Left cardiac atrium (tissue), 4 donors: ENCODE measurements at regions of chr9 and their contacts with region 1.

Region 1: GRCh38 chr9:124771021-124771866 is at the start of gene NR6A1:
- DNase-seq: peak; percentile 97
- ATAC-seq: peak; percentile 95 to 96
- total RNA-seq, gene NR6A1: 1.2 to 1.3 TPM

Region 2: DNA sequence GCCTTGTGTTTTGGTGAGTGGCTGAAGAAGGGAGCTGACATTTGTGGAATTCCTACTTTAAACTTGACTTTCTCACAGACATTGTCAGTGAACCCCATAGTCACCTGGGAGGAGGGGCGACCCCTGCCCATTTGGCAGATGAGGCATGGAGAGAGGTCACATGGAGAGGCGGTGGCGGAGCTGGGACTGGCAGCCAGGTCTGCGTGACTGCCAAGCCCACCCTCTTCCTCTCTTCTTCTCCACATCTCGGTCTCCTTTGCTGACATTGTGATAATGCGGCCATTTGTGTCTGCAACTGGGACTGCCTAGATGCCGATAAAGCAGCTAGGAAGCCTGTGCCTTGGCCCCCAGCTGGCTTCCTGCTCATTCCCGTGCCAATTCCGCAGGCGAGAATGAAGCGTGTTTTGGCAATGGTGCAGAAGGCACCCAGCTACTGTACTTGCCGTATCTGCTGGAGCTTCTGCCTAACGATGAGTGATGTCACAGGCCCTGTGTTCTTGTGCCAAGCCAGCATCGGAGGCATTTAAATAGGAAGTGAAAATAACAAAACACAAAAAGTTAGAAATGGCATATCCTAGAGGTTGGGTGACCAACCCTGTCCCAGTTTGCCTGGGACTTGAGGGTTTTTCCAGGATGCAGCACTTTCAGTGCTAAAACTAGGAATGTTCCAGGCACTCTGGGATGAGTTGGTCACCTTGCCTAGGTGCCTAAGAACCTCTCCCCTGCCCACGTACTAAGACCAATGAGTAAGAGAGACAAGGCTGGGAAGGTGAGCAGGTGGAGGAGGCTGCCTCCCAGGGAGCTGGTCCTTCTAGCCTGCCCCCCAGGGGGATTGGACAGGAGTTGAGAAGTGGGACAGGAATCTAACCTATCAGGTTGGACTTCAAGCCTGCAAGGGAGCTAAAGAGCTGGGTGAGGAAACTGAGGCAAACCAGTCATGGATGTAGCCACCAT is 29.3 kb after region 1 on chr9:
- intact Hi-C with region 1: no loop called
- DNase-seq: peak; percentile 50
- ATAC-seq: peak; percentile 70 to 71

Region 3: DNA sequence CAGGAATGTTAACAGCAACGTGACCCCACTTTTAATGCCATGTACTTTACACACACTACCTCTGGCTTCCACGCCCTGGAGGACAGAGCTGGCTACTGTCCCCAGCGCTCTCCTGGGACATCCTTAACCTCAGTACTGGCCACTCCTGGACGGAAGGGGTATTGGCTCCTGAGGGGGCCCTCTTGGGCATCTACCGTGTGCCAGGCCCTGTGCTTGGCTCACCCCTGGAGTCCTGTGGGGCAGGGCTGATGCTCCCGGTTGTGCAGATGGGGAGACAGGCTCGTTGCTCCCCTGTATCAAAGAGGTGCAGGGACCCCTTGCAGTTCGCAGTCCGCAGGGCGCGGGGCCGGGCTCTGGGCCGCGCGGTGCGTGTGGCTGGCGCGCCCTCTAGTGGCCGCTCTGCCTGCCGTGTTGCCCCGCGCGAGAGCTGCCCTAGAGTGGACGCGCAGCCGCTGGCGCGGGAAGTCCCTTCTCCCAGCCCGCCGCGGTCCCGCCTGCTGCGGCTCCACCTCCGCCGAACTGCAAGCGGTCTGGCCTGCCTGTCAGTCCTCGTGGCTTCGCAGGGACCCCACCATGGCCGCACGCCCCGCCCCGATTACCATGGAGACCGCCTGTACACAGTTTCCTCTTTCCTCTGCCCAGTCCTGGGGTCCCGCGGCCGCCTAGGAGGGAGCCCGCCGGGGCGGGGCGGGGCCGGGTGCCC is 81.7 kb after region 1 on chr9 and contains the start of gene WDR38:
- intact Hi-C with region 1: loop called (anchors 1 to 2 kb)
- DNase-seq: peak; percentile 84
- ATAC-seq: peak; percentile 89 to 92
- total RNA-seq, gene WDR38: not detected

Region 4: GRCh38 chr9:125066839-125067619 is 295.8 kb after region 1 on chr9:
- intact Hi-C with region 1: no loop called
- DNase-seq: no peak
- ATAC-seq: peak in 1 of 2 donors; percentile 23

Region 5: DNA sequence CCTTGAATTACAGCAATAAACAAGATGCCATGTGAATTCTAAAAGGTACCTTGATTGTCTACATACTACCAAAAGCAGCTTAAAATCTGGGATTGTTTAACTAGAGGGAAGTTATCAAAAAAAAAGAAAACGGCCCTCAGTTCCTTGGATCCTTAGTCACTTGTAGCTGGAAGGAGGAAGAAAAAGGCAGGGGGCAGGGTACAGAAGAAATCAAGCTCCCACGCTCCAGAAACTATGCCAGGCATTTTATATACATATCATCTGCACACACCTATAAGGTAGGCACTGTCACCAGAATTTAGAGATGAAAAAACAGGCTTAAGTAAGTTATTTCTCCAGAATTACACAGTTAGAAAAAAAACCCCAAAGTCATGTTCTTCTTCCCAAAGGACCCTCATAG is 308.7 kb after region 1 on chr9:
- intact Hi-C with region 1: no loop called
- DNase-seq: no peak
- ATAC-seq: no peak

Region 6: DNA sequence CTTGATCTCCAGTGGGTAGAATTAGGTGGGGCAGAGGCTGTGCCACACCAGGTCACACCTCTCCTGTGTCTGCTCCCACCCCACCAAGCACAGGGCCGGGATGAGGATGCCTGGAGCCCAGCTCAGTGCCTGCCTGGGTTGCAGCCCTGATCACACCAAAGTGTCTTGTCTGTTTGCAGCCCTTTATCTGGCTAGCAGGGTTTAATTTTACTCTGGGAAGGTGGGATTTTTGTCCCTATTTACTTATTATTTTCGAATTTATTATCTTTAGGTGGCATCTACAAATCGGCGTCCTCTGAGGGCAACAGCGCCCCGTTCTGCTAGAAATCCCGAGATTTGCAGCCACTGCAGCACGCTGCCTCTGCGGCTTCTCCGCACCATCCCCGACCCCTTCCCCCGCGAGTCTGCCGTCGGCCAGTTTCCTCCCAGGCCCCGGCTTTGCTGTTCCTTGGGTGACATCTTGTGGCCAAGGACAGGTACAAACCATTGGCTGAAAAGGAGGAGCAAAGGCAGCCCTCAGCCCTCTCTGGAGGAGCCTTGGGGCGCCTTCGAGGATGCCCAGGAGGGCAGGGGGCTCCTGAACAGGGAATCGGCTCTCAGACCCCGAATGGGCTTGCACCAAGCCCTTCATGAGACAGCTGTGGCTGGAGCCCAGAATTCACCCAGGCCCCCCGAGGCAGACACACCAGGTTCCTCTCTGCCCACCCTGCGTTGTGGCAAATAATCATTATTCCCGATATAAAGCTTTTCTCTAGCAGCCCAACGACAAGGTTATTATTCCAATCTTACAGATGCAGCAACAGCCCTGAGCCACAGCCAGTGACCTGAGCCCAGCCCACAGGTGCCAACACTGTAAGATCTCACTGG is 603.4 kb after region 1 on chr9:
- intact Hi-C with region 1: loop called (anchors 10 kb)
- DNase-seq: peak; percentile 65
- ATAC-seq: peak; percentile 82 to 90